GM12878 (cell line): ENCODE measurements at regions of chr11 and their contacts with region 1.

Region 1: DNA sequence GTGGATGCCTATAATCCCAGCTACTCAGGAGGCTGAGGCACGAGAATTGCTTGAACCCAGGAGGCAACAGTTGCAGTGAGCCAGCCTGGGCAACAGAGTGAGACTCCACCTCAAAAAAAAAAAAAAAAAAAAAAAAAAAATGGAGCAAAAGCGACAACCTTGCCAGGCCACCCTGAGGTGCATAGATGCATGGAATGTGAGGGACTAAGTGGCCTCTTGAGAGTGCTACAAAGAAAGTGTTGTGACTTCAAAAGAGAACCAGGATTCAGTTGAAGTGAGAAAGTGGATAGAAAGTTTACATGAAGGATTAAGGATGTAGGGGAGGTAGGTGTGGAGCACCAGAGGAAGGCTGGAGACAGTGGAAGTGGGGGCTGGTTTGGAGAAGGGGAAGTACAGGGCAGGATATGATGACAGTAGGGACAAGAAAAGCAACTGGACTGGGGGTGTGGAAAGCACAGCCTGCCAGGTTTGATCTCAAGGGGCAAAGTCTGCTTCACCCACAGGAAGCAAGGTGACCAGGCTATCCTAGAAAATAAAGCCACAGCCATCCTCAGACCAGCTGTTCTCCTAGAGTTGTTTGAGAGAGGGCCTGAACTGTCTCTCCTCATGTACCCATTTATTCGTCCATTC is 36.0 kb upstream of the OLFML1 start:
- DNase-seq: no peak
- ATAC-seq: peak; percentile 69
- H3K4me3 ChIP-seq: no peak overlapping the region
- H3K27ac ChIP-seq: no peak overlapping the region
- H3K4me1 ChIP-seq: no peaks in the 10 kb centered on the region
- H3K27me3 ChIP-seq: no peaks in the 10 kb centered on the region
- CTCF ChIP-seq: no peak
- EP300 ChIP-seq: no peak
- POLR2A ChIP-seq: no peak
- RAD21 ChIP-seq: no peak

Region 2: GRCh38 chr11:7462706-7463105 is 13.4 kb after region 1 on chr11:
- CTCF ChIA-PET with region 1: interaction called, 4 read pairs
- POLR2A ChIA-PET with region 1: interaction called, 3 read pairs
- RAD21 ChIA-PET with region 1: interaction called, 3 read pairs
- SMC1A ChIA-PET with region 1: interaction called, 21 read pairs
- in situ Hi-C with region 1: no loop called
- intact Hi-C with region 1: no loop called
- DNase-seq: no peak
- ATAC-seq: peak; percentile 58
- H3K4me3 ChIP-seq: no peak overlapping the region
- H3K27ac ChIP-seq: no peak overlapping the region
- H3K4me1 ChIP-seq: no peaks in the 10 kb centered on the region
- H3K27me3 ChIP-seq: no peaks in the 10 kb centered on the region
- CTCF ChIP-seq: no peak
- EP300 ChIP-seq: no peak
- POLR2A ChIP-seq: no peak
- RAD21 ChIP-seq: no peak

Region 3: DNA sequence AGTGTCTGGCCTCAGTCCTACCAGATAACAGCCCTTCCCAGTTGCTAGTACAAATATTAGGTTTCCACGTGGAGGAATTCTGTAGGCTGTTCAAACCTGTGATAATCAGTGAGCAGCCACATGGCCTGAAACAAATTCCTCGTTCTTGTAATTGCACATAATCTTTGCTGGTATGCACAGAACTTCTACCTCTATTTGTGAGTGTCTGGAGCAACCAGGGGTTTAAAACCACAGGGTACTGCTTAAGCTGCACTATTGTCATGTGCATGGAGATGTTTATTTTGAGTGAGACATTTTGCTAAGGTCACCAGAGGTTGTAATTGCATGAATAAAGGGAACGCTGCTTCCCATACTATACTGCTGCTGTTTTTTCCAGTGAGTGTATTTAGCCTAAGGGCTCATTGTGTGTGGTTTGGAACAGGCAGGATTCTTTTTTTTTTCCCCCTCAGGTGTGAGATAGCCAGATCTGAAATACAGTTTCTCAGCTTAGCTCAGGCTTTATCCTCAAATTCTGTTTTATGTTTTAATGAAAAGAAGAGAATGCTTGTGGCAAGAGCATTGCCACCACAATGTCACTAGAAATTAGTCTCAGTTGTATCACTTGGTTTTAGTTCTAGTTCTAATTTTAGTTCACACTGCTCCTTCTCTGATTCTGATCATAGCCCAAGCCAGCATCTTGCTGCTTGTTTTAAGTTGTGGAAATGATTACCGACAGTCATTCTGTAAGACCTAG is 163.5 kb after region 1 on chr11:
- CTCF ChIA-PET with region 1: no interaction called
- POLR2A ChIA-PET with region 1: no interaction called
- RAD21 ChIA-PET with region 1: no interaction called
- SMC1A ChIA-PET with region 1: no interaction called
- in situ Hi-C with region 1: no loop called
- intact Hi-C with region 1: no loop called
- DNase-seq: no peak
- ATAC-seq: no peak
- H3K4me3 ChIP-seq: no peak overlapping the region
- H3K27ac ChIP-seq: no peak overlapping the region
- H3K4me1 ChIP-seq: peaks cover 4% of the 10 kb centered on the region; the same call in 1 of the 2 replicates
- H3K27me3 ChIP-seq: no peaks in the 10 kb centered on the region
- CTCF ChIP-seq: no peak
- EP300 ChIP-seq: no peak
- POLR2A ChIP-seq: no peak
- RAD21 ChIP-seq: no peak